ENCODE measurements at regions of chr9 and their contacts with region 1.

Region 1: GRCh38 chr9:128940271-128940921 is 7.0 kb downstream of the DOLK start:
- DNase-seq: no peak
- H3K4me3 ChIP-seq: no peak overlapping the region
- H3K27ac ChIP-seq: peak overlapping the region; percentile 48 to 58
- H3K4me1 ChIP-seq: no peaks in the 10 kb centered on the region
- H3K27me3 ChIP-seq: no peaks in the 10 kb centered on the region
- CTCF ChIP-seq: no peak
- POLR2A ChIP-seq: no peak

Region 2: GRCh38 chr9:129524582-129525270 is 584.3 kb after region 1 on chr9:
- intact Hi-C with region 1: loop called (anchors 5 kb)
- DNase-seq: peak in 1 of 2 donors; percentile 57
- H3K4me3 ChIP-seq: no peak overlapping the region
- H3K27ac ChIP-seq: peak overlapping the region in 1 of 2 donors; percentile 38
- H3K4me1 ChIP-seq: peaks cover 0 to 6% of the 10 kb centered on the region in 2 donors
- H3K27me3 ChIP-seq: no peaks in the 10 kb centered on the region
- CTCF ChIP-seq: no peak
- POLR2A ChIP-seq: no peak

Measured in breast epithelium (tissue), 4 donors.